AG04449 (cell line): ENCODE measurements at regions of chr6 and their contacts with region 1.

Region 1: GRCh38 chr6:33771146-33772081 is 17.5 kb downstream of the LEMD2 start:
- DNase-seq: peak; percentile 98
- H3K4me3 ChIP-seq: peak overlapping the region; percentile 23; the same call in 1 of the 2 replicates
- CTCF ChIP-seq: peak; percentile 92

Region 2: GRCh38 chr6:33091957-33092356 is 679.5 kb before region 1 on chr6:
- CTCF ChIA-PET with region 1: no interaction called
- POLR2A ChIA-PET with region 1: no interaction called
- DNase-seq: no peak
- H3K4me3 ChIP-seq: no peak overlapping the region
- CTCF ChIP-seq: peak; percentile 11

Region 3: DNA sequence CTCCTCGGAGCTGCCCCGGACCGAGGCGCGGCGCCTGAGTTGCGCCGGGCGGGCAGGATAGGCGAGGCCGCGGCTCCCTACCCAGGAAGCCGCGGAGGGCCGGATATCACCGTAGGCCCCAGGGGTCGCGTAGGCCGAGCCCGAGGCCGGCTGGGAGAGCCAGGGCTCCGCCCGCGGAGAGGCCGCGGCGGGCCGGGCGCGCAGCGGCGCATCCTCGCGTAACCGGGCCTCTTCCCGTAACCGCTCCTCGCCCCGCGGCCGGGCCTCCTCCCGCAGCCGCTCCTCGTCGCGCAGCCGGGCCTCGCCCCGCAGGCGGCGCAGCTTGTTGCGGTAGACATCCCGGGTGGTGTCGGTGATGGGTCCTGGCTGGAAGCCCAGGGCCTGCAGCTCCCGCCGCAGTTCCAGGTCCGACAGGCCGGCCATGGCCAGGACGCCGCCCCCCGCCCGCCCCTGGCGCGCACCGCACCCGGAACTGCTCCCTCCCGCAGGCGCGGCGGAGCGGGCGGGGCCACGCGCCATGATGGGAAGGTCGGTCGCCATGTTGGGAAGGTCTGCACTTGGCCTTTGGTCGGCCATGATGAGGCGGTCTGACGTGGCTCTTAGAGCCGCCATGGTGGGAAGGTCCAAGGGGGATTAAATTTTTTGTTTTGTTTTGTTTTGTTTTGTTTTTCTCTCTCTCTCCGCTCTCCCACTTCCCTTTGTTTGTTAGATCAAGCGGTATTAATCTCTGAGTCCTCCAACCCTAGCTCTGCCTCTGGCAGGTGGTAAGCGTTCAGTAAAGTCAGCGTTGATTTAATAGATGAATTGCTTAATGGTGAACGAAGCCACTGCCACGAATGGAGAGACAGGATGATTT is 17.5 kb after region 1 on chr6 and contains the start of gene LEMD2:
- CTCF ChIA-PET with region 1: interaction called, 231 read pairs
- POLR2A ChIA-PET with region 1: interaction called, 15 read pairs
- DNase-seq: peak; percentile 47
- H3K4me3 ChIP-seq: peak within 1 kb of the TSS; percentile 75
- CTCF ChIP-seq: no peak

Region 4: DNA sequence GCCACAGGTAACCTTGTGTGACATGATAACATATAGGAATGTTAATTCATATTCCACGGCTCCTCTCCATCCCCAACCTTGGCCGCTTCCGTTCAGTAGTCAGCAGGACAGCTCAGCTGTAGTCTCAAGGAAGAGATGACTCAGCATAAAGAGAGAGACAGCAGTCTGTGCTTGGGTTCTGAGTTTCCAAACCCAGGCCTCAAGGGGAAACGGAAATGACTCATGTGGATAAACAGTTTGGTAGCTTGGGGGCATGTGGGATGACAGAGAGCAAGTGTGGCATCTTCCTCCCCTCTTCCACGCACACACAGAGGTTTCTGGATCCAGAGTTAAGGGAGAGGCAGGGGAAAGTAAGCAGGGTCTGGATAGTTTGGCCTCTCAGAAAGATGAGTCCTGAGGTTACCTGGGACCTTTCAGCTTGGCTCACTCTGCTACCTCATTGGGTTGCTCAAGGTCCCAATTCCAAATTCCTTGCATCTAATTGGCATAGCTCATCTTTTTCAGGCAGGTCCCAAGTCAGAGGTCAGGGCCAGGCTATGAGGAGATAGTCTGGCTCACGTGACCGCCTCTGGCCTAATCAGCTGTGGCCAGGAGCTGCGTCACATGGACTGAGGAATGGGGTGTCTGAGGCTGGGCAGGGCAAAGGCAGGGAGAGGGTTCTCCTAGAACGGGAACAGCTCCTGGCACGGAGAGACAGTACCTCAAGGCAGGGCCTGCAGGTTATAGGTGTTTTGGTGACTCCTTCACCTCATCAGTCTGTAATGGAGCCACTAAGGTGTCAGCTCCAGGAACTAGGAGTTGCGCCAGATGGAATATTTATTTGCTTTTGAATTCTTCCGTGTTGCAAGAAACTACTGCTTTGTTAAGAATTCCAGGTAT is 68.9 kb after region 1 on chr6:
- CTCF ChIA-PET with region 1: interaction called, 13 read pairs
- POLR2A ChIA-PET with region 1: interaction called, 4 read pairs
- DNase-seq: peak; percentile 89
- H3K4me3 ChIP-seq: no peak overlapping the region
- CTCF ChIP-seq: no peak

Region 5: DNA sequence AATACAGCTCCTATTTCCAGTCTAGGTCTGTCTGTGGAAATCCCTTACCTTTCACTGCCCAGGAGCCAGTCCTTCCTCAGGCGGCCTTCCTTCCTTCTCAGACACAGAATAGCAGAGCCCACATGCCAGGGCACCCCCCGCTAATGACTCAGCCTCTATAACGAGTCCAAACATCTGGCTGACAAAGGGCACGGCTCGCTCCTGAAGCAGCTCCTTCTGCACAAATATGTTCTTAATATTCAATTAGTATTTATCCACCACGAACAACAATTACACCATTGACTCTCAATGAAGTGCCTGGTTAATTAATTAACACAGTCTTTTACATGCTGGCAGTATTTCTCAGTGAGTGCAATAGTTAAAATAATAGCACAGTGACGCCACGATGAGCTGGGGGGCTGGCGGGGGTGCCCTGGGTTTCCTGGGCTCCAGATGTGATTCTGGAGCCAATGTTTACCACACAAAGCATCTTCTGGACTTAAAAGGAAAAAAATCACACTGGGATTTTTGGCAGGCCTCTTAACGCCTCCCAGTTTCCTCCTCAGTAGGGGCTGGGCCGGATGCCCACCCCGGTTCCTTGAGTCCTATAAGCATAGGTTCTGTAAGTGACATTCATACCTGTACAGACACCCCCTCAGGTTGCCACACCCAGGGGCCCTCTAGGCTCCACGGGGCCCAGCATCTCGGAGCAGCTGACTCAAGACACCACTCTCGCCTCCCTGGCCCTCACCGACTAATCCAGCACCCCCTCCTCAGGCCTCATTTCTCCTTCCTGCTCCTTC is 191.0 kb after region 1 on chr6:
- CTCF ChIA-PET with region 1: no interaction called
- POLR2A ChIA-PET with region 1: no interaction called
- DNase-seq: no peak
- H3K4me3 ChIP-seq: no peak overlapping the region
- CTCF ChIP-seq: no peak

Region 6: DNA sequence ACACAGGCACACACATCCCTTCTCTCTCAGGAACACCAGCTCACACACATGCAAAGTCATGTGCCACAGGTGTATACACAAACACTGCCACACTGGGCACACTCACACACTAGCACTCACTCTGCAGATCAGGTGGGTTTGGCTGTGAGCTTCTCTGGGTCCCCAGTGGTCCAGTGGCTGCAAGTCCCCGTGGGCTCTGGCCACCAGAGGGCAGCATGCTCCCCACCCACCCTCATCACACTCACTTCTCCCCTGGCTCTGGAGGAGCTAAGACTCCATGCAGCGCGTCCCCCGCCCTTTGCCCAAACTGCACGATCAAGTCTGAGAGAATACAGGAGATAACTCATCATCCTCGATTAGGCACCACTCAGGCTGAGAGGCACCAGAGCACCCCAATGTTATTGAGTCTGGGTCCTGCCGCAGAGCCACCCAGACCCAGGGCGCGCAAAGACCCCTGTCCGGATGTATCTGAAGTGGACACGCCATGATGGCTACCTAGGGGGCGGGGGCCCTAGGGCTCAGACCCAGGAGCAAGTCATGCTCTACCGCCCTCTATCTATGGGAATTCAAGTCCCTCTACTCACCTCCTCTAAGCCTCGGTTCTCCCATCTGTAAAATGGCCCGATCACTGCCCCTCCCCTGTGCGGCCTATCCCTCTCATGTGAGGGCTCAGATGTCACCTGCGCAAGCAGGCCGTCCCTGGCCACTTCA is 284.0 kb after region 1 on chr6:
- CTCF ChIA-PET with region 1: interaction called, 12 read pairs
- POLR2A ChIA-PET with region 1: no interaction called
- DNase-seq: no peak
- H3K4me3 ChIP-seq: no peak overlapping the region
- CTCF ChIP-seq: peak; percentile 86